ENCODE measurements at regions of chr18 and their contacts with region 1.

Region 1: GRCh38 chr18:50356036-50356945 is 18.6 kb upstream of the SKA1 start:
- DNase-seq: peak; percentile 36
- ATAC-seq: peak; percentile 77
- H3K4me3 Mint-ChIP-seq: no peak overlapping the region
- H3K27ac Mint-ChIP-seq: no peak overlapping the region
- H3K4me1 Mint-ChIP-seq: peaks cover 9% of the 10 kb centered on the region
- H3K27me3 Mint-ChIP-seq: peaks cover 18% of the 10 kb centered on the region
- CTCF ChIP-seq: peak; percentile 30

Region 2: DNA sequence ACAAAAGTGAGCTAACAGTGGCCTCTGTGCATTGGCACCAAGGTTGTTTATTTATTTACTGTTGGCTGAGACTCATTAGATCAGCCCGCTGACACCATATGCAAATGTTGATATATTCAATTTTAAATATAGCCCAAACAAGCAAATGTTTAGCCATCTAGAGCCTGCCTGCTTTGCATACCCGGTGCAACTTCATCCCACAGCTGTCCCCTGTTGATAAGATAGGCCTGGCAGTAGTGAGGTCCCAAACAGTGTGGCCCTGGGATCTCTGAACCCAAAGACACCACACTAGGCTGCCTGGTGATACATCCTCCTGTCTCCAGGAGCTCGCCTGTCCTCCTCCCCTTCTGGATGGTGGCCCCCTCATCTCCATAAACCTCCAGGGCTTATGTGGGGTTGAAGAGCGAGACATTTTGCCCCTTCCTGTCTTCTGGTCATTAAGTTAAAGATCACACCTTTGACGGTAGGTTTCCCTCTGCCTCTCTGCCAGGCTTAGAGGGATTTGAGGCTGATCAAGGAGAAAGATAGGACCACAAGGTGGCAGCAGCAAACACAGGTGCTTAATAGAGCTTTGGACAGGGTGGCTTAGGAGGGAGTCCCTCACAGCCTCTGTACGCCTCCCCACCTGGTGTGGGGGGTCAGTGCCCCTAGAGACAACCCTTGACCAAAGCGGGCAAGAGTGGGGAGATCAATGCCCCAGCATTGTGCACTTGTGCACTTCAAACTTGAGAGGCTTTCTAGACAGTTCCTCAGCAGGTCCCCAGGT is 137.7 kb before region 1 on chr18:
- CTCF ChIA-PET with region 1: interaction called, 66 read pairs
- POLR2A ChIA-PET with region 1: no interaction called
- intact Hi-C with region 1: loop called (anchors 1 kb)
- DNase-seq: peak; percentile 58
- ATAC-seq: peak; percentile 60
- H3K4me3 Mint-ChIP-seq: no peak overlapping the region
- H3K27ac Mint-ChIP-seq: no peak overlapping the region
- H3K4me1 Mint-ChIP-seq: no peaks in the 10 kb centered on the region
- H3K27me3 Mint-ChIP-seq: peaks cover 21% of the 10 kb centered on the region
- CTCF ChIP-seq: peak; percentile 46

Region 3: GRCh38 chr18:50287441-50288347 is 68.6 kb before region 1 on chr18 and contains the start of gene CXXC1:
- CTCF ChIA-PET with region 1: interaction called, 13 read pairs
- POLR2A ChIA-PET with region 1: no interaction called
- intact Hi-C with region 1: no loop called
- DNase-seq: peak; percentile 98
- ATAC-seq: peak; percentile 92
- H3K4me3 Mint-ChIP-seq: peak within 1 kb of the TSS; percentile 96
- H3K27ac Mint-ChIP-seq: peak within 1 kb of the TSS; percentile 95
- H3K4me1 Mint-ChIP-seq: peaks cover 33% of the 10 kb centered on the region
- H3K27me3 Mint-ChIP-seq: no peaks in the 10 kb centered on the region
- CTCF ChIP-seq: no peak
- total RNA-seq, gene CXXC1: 87.0 to 88.0 TPM

Region 4: DNA sequence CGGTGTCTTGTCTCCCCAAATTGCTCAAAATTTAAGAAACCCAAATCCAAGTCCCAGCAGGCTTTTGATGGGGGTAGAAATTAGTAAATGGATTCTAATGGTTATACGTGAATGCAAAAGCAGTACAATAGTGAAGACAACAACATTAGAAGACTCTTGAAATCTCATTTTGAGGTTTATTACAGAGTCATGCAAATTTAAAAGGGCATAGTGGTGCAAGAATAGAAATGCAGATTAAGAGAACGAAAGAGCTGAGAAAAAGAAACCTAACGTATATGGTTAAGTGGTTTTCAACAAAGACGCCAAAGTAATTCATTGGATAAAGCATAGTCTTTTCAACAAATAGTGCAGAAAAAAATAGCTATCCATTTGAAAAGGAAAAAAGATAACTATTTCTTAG is 35.6 kb before region 1 on chr18:
- CTCF ChIA-PET with region 1: interaction called, 10 read pairs
- POLR2A ChIA-PET with region 1: no interaction called
- intact Hi-C with region 1: no loop called
- DNase-seq: no peak
- ATAC-seq: peak; percentile 49
- H3K4me3 Mint-ChIP-seq: peak overlapping the region; percentile 31
- H3K27ac Mint-ChIP-seq: peak overlapping the region; percentile 54
- H3K4me1 Mint-ChIP-seq: peaks cover 10% of the 10 kb centered on the region
- H3K27me3 Mint-ChIP-seq: peaks cover 3% of the 10 kb centered on the region
- CTCF ChIP-seq: no peak

Region 5: GRCh38 chr18:50374753-50375391 is 18.6 kb after region 1 on chr18 and contains the start of gene SKA1:
- CTCF ChIA-PET with region 1: interaction called, 35 read pairs
- POLR2A ChIA-PET with region 1: interaction called, 3 read pairs
- intact Hi-C with region 1: no loop called
- DNase-seq: peak; percentile 94
- ATAC-seq: peak; percentile 99
- H3K4me3 Mint-ChIP-seq: peak within 1 kb of the TSS; percentile 90
- H3K27ac Mint-ChIP-seq: peak within 1 kb of the TSS; percentile 91
- H3K4me1 Mint-ChIP-seq: peaks cover 4% of the 10 kb centered on the region
- H3K27me3 Mint-ChIP-seq: peaks cover 3% of the 10 kb centered on the region
- CTCF ChIP-seq: no peak
- total RNA-seq, gene SKA1: 29.4 to 32.2 TPM

Region 6: GRCh38 chr18:50573679-50574078 is 217.4 kb after region 1 on chr18:
- CTCF ChIA-PET with region 1: no interaction called
- POLR2A ChIA-PET with region 1: no interaction called
- intact Hi-C with region 1: no loop called
- DNase-seq: no peak
- ATAC-seq: no peak
- H3K4me3 Mint-ChIP-seq: no peak overlapping the region
- H3K27ac Mint-ChIP-seq: no peak overlapping the region
- H3K4me1 Mint-ChIP-seq: no peaks in the 10 kb centered on the region
- H3K27me3 Mint-ChIP-seq: peaks cover 17% of the 10 kb centered on the region
- CTCF ChIP-seq: no peak

Measured in activated CD8-positive, alpha-beta T cell treated with anti-CD3 and anti-CD28 coated beads for 36 hours (primary cell).